ENCODE measurements at regions of chr2 and their contacts with region 1.

Region 1: GRCh38 chr2:64609227-64609941 is 44.3 kb downstream of the SERTAD2 start:
- DNase-seq: peak; percentile 73
- H3K4me3 Mint-ChIP-seq: peak overlapping the region; percentile 66
- H3K27ac Mint-ChIP-seq: no peak overlapping the region
- H3K4me1 Mint-ChIP-seq: peaks cover 29% of the 10 kb centered on the region
- H3K27me3 Mint-ChIP-seq: peaks cover 12% of the 10 kb centered on the region

Region 2: GRCh38 chr2:64243081-64244036 is 366.0 kb before region 1 on chr2:
- CTCF ChIA-PET with region 1: no interaction called
- POLR2A ChIA-PET with region 1: no interaction called
- DNase-seq: no peak
- H3K4me3 Mint-ChIP-seq: no peak overlapping the region
- H3K27ac Mint-ChIP-seq: no peak overlapping the region
- H3K4me1 Mint-ChIP-seq: no peaks in the 10 kb centered on the region
- H3K27me3 Mint-ChIP-seq: peaks cover 15% of the 10 kb centered on the region

Region 3: GRCh38 chr2:64586883-64587481 is 22.4 kb before region 1 on chr2:
- CTCF ChIA-PET with region 1: interaction called, 14 read pairs
- POLR2A ChIA-PET with region 1: interaction called, 3 read pairs
- DNase-seq: no peak
- H3K4me3 Mint-ChIP-seq: no peak overlapping the region
- H3K27ac Mint-ChIP-seq: no peak overlapping the region
- H3K4me1 Mint-ChIP-seq: peaks cover 9% of the 10 kb centered on the region
- H3K27me3 Mint-ChIP-seq: no peaks in the 10 kb centered on the region

Region 4: DNA sequence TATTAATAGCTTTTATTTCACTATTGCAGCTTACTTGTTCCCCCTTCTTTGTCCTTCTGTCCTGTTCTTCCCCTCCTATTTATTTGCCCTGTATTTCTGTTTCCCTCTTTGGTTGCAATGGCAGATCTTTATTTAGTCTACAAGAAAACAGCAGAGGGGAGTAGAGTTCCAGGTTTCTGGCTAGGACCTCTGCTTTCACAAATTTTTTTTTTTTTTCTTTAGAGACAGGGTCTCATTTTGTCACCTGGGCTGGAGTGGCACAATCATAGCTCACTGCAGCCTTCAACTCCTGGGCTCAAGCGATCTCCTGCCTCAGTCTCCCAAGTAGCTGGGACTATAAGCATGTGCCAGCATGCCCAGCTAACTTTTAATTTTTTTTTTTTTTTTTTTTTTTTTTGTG is 1011.1 kb after region 1 on chr2:
- CTCF ChIA-PET with region 1: no interaction called
- POLR2A ChIA-PET with region 1: no interaction called
- DNase-seq: no peak
- H3K4me3 Mint-ChIP-seq: no peak overlapping the region
- H3K27ac Mint-ChIP-seq: no peak overlapping the region
- H3K4me1 Mint-ChIP-seq: no peaks in the 10 kb centered on the region
- H3K27me3 Mint-ChIP-seq: peaks cover 25% of the 10 kb centered on the region

Measured in activated CD4-positive, alpha-beta memory T cell treated with anti-CD3 and anti-CD28 coated beads, Interleukin-2, amount 10 ng/mL, durations not matched to agents 7 days and 5 days (primary cell).